HCT116 (cell line): ENCODE measurements at regions of chr1 and their contacts with region 1.

Region 1: GRCh38 chr1:44049839-44050238 is 18.6 kb upstream of the SLC6A9 start:
- DNase-seq: no peak
- ATAC-seq: no peak
- H3K4me3 ChIP-seq: no peak overlapping the region
- H3K27ac ChIP-seq: no peak overlapping the region
- H3K4me1 ChIP-seq: peaks cover 2 to 7% of the 10 kb centered on the region in 2 experiments; a peak in 2 of 4 replicates
- H3K27me3 ChIP-seq: no peaks in the 10 kb centered on the region
- CTCF ChIP-seq: no peak
- POLR2A ChIP-seq: no peak
- RAD21 ChIP-seq: no peak

Region 2: DNA sequence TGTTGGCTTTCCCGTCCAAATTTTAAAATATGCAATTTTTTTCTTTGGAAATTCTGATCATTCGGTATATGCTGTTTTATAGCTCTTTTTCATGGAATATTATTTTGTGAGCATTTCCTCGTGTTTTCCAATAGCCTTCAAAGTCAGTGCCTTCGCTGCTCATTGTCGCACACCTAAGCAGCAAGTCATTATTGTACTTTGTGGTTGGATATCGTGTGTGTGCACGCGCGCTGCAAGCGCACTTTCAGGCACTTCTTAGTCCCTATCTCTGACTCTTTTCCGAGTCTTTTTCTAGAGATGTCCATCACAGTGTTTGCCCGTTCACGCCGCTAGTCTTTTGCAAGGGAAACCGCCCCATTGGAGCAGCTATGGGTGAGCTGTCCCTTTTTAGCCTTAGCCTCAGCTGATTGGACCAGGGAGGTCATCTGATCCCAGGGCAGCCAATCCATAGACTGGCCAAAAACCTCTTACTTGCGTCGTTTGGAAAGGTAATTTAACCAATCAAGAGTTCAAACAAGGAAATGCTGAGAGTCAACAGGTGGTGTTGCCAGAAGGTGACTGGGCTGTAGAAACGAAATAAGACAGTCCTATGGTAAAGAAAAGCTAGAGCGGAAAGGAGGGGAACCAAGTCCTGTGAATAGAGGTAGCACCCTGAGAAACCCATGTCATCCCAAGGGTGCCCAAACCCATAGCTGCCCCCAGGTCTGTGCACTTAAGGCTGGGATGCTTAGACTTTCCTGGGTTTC is 595.4 kb before region 1 on chr1:
- CTCF ChIA-PET with region 1: no interaction called
- POLR2A ChIA-PET with region 1: no interaction called
- RAD21 ChIA-PET with region 1: no interaction called
- intact Hi-C with region 1: loop called (anchors 10 kb)
- DNase-seq: peak; percentile 56
- ATAC-seq: peak; percentile 66
- H3K4me3 ChIP-seq: peak overlapping the region; percentile 57 to 66
- H3K27ac ChIP-seq: peak overlapping the region; percentile 63
- H3K4me1 ChIP-seq: peaks cover 22 to 29% of the 10 kb centered on the region in 2 experiments
- H3K27me3 ChIP-seq: no peaks in the 10 kb centered on the region
- CTCF ChIP-seq: no peak
- POLR2A ChIP-seq: no peak
- RAD21 ChIP-seq: no peak

Region 3: GRCh38 chr1:43991476-43992231 is 58.2 kb before region 1 on chr1 and contains the start of gene CCDC24:
- CTCF ChIA-PET with region 1: interaction called, 13 read pairs
- POLR2A ChIA-PET with region 1: no interaction called
- RAD21 ChIA-PET with region 1: interaction called in 1 of 2 experiments, 3 read pairs
- intact Hi-C with region 1: loop called (anchors 2 kb)
- DNase-seq: peak; percentile 63
- ATAC-seq: peak; percentile 80
- H3K4me3 ChIP-seq: peak within 1 kb of the TSS; percentile 63 to 72
- H3K27ac ChIP-seq: peak within 1 kb of the TSS; percentile 82
- H3K4me1 ChIP-seq: peaks cover 10 to 39% of the 10 kb centered on the region in 2 experiments
- H3K27me3 ChIP-seq: no peaks in the 10 kb centered on the region
- CTCF ChIP-seq: no peak
- POLR2A ChIP-seq: peak; percentile 33
- RAD21 ChIP-seq: no peak
- total RNA-seq, gene CCDC24: 23.3 TPM

Region 4: GRCh38 chr1:44002606-44003157 is 47.2 kb before region 1 on chr1:
- CTCF ChIA-PET with region 1: interaction called, 42 read pairs
- POLR2A ChIA-PET with region 1: no interaction called
- RAD21 ChIA-PET with region 1: interaction called, 3 to 6 read pairs
- intact Hi-C with region 1: loop called (anchors 1 kb)
- DNase-seq: no peak
- ATAC-seq: no peak
- H3K4me3 ChIP-seq: no peak overlapping the region
- H3K27ac ChIP-seq: no peak overlapping the region
- H3K4me1 ChIP-seq: peaks cover 0 to 4% of the 10 kb centered on the region in 2 experiments; a peak in 2 of 4 replicates
- H3K27me3 ChIP-seq: no peaks in the 10 kb centered on the region
- CTCF ChIP-seq: peak in 2 of 3 experiments; percentile 39 to 47; a peak in 4 of 6 replicates
- POLR2A ChIP-seq: no peak
- RAD21 ChIP-seq: no peak

Region 5: GRCh38 chr1:44036409-44037139 is 13.3 kb before region 1 on chr1:
- CTCF ChIA-PET with region 1: interaction called, 21 read pairs
- POLR2A ChIA-PET with region 1: interaction called, 3 read pairs
- RAD21 ChIA-PET with region 1: interaction called in 1 of 2 experiments, 6 read pairs
- intact Hi-C with region 1: no loop called
- DNase-seq: peak; percentile 64
- ATAC-seq: peak; percentile 91
- H3K4me3 ChIP-seq: no peak overlapping the region
- H3K27ac ChIP-seq: no peak overlapping the region; the same call in 1 of the 2 replicates
- H3K4me1 ChIP-seq: peaks cover 16 to 17% of the 10 kb centered on the region in 2 experiments
- H3K27me3 ChIP-seq: no peaks in the 10 kb centered on the region
- CTCF ChIP-seq: peak in 2 of 3 experiments; percentile 91 to 95; a peak in 4 of 6 replicates
- POLR2A ChIP-seq: no peak
- RAD21 ChIP-seq: no peak